ENCODE measurements at regions of chr1 and their contacts with region 1.

Region 1: DNA sequence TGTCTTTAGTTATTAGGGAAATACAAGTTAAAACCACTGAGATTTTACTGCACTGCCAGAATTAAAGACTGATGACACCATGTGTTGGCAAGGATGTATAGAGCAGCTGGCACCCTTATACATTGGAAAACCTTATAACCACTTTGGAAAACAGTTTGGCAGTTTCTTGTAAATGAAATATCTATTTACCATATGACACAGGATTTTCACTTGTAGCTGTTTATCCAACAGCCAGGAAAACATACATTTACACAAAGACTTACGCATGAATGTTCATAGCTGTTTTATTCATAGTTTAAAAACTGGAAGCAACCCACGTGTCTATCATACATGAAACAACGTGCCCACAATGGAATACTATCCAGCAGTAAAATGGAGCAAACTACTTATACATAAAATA is 45.3 kb downstream of the PRRC2C start:
- DNase-seq: no peak
- ATAC-seq: no peak

Region 2: DNA sequence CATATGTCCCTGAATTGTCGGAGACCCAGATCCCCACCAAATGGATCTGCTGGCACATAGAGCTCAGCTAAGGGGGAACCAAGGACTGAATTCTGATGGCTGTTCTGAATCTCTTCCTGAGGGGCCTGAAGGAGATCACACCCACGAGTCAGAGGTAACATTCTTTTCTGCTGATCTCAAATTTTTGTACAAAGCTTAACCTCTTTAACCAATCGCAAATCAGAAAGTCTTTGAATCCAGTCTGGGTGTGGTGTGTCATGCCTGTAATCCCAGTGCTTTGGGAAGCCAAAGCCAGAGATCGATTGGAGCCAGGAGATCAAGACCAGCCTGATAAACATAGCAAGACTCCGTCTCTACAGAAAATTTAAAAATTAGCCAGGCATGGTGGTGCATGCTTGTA is 108.2 kb before region 1 on chr1:
- intact Hi-C with region 1: no loop called
- DNase-seq: no peak
- ATAC-seq: no peak

Region 3: GRCh38 chr1:171468120-171469035 is 62.3 kb before region 1 on chr1:
- intact Hi-C with region 1: no loop called
- DNase-seq: no peak
- ATAC-seq: no peak

Region 4: DNA sequence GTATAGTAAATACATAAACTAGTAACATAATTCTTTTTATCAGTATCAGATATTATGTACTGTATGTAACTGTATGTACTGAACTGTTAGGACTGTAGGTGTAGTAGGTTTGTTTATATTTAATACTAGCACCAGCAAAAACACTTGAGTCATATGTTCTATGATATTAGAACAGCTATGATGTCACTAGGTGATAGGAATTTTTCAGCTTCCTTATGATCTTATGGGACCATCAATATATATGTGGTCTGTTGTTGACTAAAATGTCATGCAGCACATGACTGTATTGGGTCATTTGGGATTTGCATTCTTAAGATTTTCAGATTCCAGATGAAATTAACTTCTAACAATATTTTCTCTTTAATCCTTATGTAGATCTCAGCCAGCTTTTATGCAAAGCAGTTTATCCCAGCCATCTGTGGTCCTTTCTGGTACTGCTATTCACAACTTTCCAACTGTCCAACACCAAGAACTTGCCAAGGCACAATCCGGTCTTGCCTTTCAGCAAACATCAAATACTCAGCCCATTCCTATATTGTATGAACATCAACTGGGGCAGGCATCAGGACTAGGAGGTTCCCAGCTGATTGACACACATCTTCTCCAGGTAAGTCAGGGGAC is 53.0 kb after region 1 on chr1:
- intact Hi-C with region 1: loop called (anchors 10 kb)
- DNase-seq: no peak
- ATAC-seq: no peak

Measured in Right ventricle myocardium inferior (tissue), 1 donor.